ENCODE measurements at regions of chr2 and their contacts with region 1.

Region 1: DNA sequence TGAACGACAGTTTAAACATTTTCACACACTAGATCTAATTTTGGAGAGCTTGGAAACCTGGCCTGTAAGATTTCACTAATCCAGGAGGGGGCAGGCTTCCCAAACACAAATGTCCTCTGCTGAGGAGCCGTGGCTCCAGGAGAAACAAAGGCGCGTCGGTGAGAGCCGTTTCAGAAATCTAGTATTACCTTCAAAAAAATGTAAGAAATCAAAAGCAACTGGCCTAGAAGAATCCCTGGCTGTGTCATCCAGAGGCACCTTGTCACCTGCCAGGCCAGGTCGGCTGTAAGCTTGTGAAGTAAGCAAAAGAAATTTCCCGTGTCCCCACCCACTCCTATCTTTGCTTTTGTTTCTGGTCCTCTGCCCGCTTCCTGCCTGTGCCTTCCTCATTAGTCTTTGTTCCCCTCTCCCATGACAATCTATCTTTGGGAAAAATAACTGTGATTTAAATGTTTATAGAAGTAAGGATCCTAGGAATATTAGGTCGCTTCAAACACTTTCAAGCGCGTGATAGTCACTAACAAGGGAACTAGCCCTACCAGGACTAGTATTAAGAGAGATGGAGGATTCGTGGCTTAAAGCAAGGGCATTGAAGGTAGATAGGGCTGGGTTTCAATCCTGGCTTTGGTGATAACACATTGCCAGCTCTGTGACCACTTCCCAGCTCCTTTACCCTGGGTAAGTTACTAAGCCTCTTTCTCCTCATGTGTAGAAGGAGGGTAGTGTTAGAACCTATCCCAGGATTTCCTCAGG is 99.5 kb upstream of the STK39 start:
- DNase-seq: peak; percentile 68
- H3K4me3 ChIP-seq: peak overlapping the region; percentile 26 to 38
- H3K27ac ChIP-seq: peak overlapping the region; percentile 26 to 46
- H3K4me1 ChIP-seq: no peaks in the 10 kb centered on the region
- H3K27me3 ChIP-seq: no peaks in the 10 kb centered on the region
- CTCF ChIP-seq: peak; percentile 52 to 89 (median 87)
- POLR2A ChIP-seq: no peak

Region 2: GRCh38 chr2:168545439-168546082 is 198.7 kb after region 1 on chr2:
- intact Hi-C with region 1: no loop called
- DNase-seq: no peak
- H3K4me3 ChIP-seq: no peak overlapping the region
- H3K27ac ChIP-seq: no peak overlapping the region
- H3K4me1 ChIP-seq: no peaks in the 10 kb centered on the region
- H3K27me3 ChIP-seq: no peaks in the 10 kb centered on the region
- CTCF ChIP-seq: no peak
- POLR2A ChIP-seq: no peak

Region 3: GRCh38 chr2:168699844-168700417 is 353.0 kb after region 1 on chr2:
- intact Hi-C with region 1: loop called (anchors 5 kb)
- DNase-seq: peak; percentile 25
- H3K4me3 ChIP-seq: no peak overlapping the region
- H3K27ac ChIP-seq: no peak overlapping the region
- H3K4me1 ChIP-seq: no peaks in the 10 kb centered on the region
- H3K27me3 ChIP-seq: no peaks in the 10 kb centered on the region
- CTCF ChIP-seq: no peak
- POLR2A ChIP-seq: no peak

Region 4: GRCh38 chr2:168758970-168759820 is 412.3 kb after region 1 on chr2:
- intact Hi-C with region 1: loop called (anchors 2 kb)
- DNase-seq: peak; percentile 33
- H3K4me3 ChIP-seq: no peak overlapping the region
- H3K27ac ChIP-seq: no peak overlapping the region
- H3K4me1 ChIP-seq: no peaks in the 10 kb centered on the region
- H3K27me3 ChIP-seq: no peaks in the 10 kb centered on the region
- CTCF ChIP-seq: peak in 3 of 4 experiments; percentile 56 to 74 (median 66)
- POLR2A ChIP-seq: no peak

Region 5: GRCh38 chr2:168920504-168921157 is 573.7 kb after region 1 on chr2:
- intact Hi-C with region 1: loop called (anchors 5 kb)
- DNase-seq: no peak
- H3K4me3 ChIP-seq: no peak overlapping the region
- H3K27ac ChIP-seq: no peak overlapping the region
- H3K4me1 ChIP-seq: no peaks in the 10 kb centered on the region
- H3K27me3 ChIP-seq: no peaks in the 10 kb centered on the region
- CTCF ChIP-seq: peak; percentile 31 to 71 (median 66)
- POLR2A ChIP-seq: no peak